Dorsolateral prefrontal cortex (tissue), 120 donors: ENCODE measurements at regions of chr2 and their contacts with region 1.

Region 1: GRCh38 chr2:85750587-85751575 is 2.9 kb upstream of the ATOH8 start:
- DNase-seq: peak; percentile 68 to 87 (median 80)
- H3K4me3 ChIP-seq: no peak overlapping the region
- H3K27ac ChIP-seq: peak overlapping the region in 42 of 59 donors; percentile 3 to 87 (median 42)
- H3K27me3 ChIP-seq: peaks cover 0 to 6% (median 0%) of the 10 kb centered on the region in 45 donors
- CTCF ChIP-seq: peak; percentile 38 to 93 (median 85)

Region 2: DNA sequence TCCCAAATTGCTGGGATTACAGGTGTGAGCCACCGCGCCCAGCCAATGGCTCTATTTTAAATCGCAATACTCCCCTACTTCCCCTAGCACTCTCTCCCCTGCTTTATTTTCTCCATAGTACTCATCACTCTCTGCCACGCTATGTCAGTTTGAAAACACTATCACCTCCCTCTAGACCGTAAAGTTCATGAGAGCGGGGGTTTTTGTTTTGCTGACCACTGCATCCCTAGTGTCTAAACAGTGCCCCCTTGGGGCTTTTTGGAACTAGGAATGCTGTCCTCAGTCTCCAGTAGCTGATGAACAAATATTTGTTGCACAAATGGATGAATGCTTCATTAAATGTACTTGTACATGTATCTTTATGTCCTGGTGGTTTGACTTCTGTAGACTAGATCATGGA is 47.0 kb after region 1 on chr2:
- intact Hi-C with region 1: loop called (anchors 2 to 5 kb)
- DNase-seq: peak in 4 of 10 donors; percentile 35 to 64 (median 52)
- H3K4me3 ChIP-seq: no peak overlapping the region
- H3K27ac ChIP-seq: peak overlapping the region in 39 of 59 donors; percentile 55 to 99 (median 94)
- H3K27me3 ChIP-seq: no peaks in the 10 kb centered on the region
- CTCF ChIP-seq: peak in 55 of 56 donors; percentile 44 to 86 (median 68)